Ascending aorta (tissue), 2 donors: ENCODE measurements at regions of chr16 and their contacts with region 1.

Region 1: GRCh38 chr16:70715055-70715858 is 29.4 kb upstream of the MTSS2 start:
- DNase-seq: peak; percentile 92 to 98
- H3K4me3 ChIP-seq: peak overlapping the region in 1 of 2 donors; percentile 43
- H3K27ac ChIP-seq: peak overlapping the region; percentile 91 to 93
- H3K4me1 ChIP-seq: peaks cover 11 to 21% of the 10 kb centered on the region in 2 donors
- H3K27me3 ChIP-seq: no peaks in the 10 kb centered on the region
- CTCF ChIP-seq: peak in 1 of 3 experiments; percentile 43

Region 2: GRCh38 chr16:70674221-70675014 is 40.8 kb before region 1 on chr16:
- intact Hi-C with region 1: no loop called
- DNase-seq: peak in 1 of 2 donors; percentile 60
- H3K4me3 ChIP-seq: no peak overlapping the region
- H3K27ac ChIP-seq: no peak overlapping the region
- H3K4me1 ChIP-seq: no peaks in the 10 kb centered on the region
- H3K27me3 ChIP-seq: no peaks in the 10 kb centered on the region
- CTCF ChIP-seq: no peak

Region 3: DNA sequence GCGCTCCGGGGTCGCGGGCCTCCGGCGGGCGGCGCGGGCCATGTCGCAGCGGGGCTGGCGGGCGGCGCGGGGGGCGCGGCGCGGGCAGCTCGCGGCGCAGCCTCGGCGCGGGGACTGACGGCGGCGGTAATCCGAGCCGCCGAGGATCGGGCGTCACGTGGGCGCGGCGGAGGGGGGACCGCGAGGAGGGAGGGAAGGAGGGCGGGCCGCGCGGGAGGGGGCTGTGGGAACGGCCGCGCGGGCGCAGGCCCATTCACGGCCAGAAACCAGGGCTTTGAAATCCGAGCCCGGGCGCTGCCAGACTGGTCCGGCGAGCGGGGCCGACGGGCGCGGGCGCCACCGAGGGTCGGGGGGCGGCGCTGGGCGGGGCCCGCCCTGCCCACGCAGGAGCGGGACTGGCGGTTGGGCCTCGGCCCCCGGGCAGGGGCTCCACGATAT is 29.3 kb before region 1 on chr16 and contains the start of gene MTSS2:
- intact Hi-C with region 1: loop called (anchors 2 kb)
- DNase-seq: peak in 1 of 2 donors; percentile 90
- H3K4me3 ChIP-seq: peak within 1 kb of the TSS; percentile 89 to 91
- H3K27ac ChIP-seq: peak within 1 kb of the TSS; percentile 96 to 97
- H3K4me1 ChIP-seq: peaks cover 36 to 84% of the 10 kb centered on the region in 2 donors
- H3K27me3 ChIP-seq: no peaks in the 10 kb centered on the region
- CTCF ChIP-seq: no peak
- total RNA-seq, gene MTSS2: 98.6 TPM

Region 4: DNA sequence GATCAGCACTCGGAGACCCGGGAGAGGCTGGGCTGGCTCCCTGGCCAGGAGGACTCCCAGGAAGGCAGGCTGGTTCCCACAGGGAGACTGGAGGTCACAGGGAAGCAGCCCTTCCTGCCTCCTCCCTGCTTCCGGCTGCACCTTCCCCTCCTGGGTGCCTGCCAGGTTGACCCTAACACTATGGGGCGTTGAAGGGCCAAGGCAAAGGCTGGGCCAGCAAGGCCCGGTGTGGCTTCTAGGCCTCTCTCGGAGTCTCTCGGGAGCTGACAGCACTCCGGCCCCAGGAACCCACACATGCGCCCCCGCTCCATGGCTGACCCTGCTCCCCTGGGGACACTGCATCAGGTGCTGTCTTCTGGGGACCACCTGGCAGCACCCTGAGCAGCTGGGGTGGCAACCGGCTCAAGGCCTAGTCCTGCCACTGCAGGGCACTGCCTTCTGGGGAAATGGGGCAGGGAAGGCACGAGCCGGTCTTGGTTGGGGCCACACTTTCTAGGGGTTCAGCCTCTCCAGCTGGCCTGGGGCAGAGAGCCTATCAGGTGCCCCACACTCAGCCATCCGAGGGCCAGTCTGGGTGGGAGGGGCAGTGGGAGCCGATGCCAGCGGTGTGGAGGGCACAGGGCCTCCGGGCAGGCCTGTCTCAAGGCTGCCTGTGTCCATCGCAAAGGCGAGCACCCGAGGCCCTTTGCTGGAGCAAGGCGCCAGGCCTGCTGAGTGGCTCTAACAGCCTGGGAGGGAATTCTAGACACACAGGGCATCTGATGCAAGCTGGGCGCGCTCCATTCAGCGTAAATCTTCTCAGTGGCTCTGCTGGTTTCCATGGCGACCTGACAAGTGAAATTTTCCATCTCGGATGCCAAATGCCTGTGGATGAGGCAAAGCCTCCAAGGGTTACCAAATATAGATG is 23.8 kb before region 1 on chr16:
- intact Hi-C with region 1: loop called (anchors 2 kb)
- DNase-seq: peak; percentile 82 to 97
- H3K4me3 ChIP-seq: no peak overlapping the region
- H3K27ac ChIP-seq: peak overlapping the region; percentile 96 to 97
- H3K4me1 ChIP-seq: peaks cover 49 to 86% of the 10 kb centered on the region in 2 donors
- H3K27me3 ChIP-seq: no peaks in the 10 kb centered on the region
- CTCF ChIP-seq: no peak

Region 5: DNA sequence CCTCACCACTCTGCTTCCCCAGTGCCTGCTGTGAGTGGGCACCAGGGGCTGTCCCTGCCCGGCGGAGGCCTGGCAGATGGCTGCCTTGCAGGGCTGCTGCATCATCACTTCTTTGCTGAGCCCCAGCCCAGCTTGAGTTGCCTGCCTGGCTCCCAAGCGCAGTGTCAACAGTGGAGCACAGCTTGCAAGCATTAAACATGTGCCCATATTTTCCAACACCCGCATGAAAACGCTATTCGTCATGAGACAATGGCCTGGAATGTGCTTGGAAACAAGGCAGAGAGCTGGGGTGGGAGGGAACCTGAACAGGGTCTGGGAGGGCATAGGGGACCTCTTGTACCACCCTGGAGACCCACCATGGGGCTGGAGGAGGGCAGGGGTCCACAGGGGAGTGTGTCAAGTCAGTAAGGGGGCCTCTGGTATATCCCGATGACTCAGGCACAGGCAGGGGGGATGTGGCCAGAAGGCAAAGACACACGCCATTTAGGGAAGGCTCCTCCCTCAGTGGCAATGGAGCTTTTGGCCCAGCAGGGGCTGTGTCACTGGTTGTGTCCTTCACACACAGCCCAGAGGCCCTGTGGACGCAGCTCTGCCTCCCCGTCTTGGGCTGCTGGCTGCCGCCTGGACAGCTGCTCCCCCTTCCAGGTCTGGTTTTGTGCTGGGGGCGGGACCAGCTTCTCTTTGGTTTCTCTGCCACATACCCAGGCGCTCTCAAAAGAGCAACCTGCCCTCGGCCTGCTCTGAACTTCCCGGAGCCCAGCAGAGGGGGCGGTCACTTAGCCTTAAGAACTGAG is 12.0 kb before region 1 on chr16:
- intact Hi-C with region 1: loop called (anchors 1 kb)
- DNase-seq: peak; percentile 80 to 93
- H3K4me3 ChIP-seq: no peak overlapping the region
- H3K27ac ChIP-seq: peak overlapping the region; percentile 91 to 96
- H3K4me1 ChIP-seq: peaks cover 33 to 69% of the 10 kb centered on the region in 2 donors
- H3K27me3 ChIP-seq: no peaks in the 10 kb centered on the region
- CTCF ChIP-seq: peak; percentile 43 to 70 (median 52)

Region 6: DNA sequence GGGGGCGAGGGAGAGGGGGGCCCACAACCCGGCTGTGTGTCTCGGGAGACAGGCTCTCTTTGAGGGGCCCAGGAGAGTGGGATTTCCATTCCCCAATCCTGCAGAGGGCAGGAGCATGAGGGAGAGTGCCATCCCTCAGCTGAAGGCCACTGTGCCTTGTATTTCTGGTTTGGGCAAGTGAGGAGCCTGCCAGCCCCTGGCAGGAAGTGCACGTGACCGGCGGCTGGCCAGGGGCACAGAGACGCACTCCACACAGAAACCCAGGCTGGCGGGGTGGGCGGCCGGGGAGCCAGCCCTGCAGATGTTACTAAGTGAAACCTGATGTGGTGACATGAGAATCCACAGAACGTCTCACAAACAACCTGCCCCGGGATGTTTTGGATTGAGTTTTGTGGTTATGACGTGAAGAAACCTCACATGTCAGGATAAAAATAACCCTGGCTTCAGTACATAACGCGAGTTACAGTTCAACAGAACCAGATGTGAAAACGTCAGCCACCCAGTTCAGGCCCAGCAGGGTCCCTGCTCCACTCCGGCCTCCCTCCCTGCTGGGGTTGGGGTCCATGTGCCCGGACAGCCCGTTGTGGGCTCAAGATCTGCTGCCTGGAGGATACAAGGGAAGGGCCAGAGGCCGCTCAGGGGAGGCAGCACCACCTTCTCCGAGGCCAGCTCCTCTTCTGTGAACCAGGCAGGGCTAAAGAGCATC is 22.3 kb after region 1 on chr16:
- intact Hi-C with region 1: loop called (anchors 1 kb)
- DNase-seq: peak; percentile 45 to 85
- H3K4me3 ChIP-seq: no peak overlapping the region
- H3K27ac ChIP-seq: peak overlapping the region; percentile 90 to 91
- H3K4me1 ChIP-seq: peaks cover 14 to 32% of the 10 kb centered on the region in 2 donors
- H3K27me3 ChIP-seq: no peaks in the 10 kb centered on the region
- CTCF ChIP-seq: no peak

Region 7: GRCh38 chr16:70746708-70747424 is 31.6 kb after region 1 on chr16:
- intact Hi-C with region 1: loop called (anchors 1 kb)
- DNase-seq: peak; percentile 58 to 93
- H3K4me3 ChIP-seq: peak overlapping the region in 1 of 2 donors; percentile 2
- H3K27ac ChIP-seq: peak overlapping the region; percentile 91 to 92
- H3K4me1 ChIP-seq: peaks cover 13 to 49% of the 10 kb centered on the region in 2 donors
- H3K27me3 ChIP-seq: no peaks in the 10 kb centered on the region
- CTCF ChIP-seq: no peak

Region 8: GRCh38 chr16:70770626-70771552 is 55.6 kb after region 1 on chr16:
- intact Hi-C with region 1: loop called (anchors 2 kb)
- DNase-seq: peak in 1 of 2 donors; percentile 78
- H3K4me3 ChIP-seq: no peak overlapping the region
- H3K27ac ChIP-seq: no peak overlapping the region
- H3K4me1 ChIP-seq: peaks cover 0 to 5% of the 10 kb centered on the region in 2 donors
- H3K27me3 ChIP-seq: no peaks in the 10 kb centered on the region
- CTCF ChIP-seq: peak; percentile 92 to 98 (median 96)